ENCODE measurements at regions of chr22 and their contacts with region 1.

Region 1: DNA sequence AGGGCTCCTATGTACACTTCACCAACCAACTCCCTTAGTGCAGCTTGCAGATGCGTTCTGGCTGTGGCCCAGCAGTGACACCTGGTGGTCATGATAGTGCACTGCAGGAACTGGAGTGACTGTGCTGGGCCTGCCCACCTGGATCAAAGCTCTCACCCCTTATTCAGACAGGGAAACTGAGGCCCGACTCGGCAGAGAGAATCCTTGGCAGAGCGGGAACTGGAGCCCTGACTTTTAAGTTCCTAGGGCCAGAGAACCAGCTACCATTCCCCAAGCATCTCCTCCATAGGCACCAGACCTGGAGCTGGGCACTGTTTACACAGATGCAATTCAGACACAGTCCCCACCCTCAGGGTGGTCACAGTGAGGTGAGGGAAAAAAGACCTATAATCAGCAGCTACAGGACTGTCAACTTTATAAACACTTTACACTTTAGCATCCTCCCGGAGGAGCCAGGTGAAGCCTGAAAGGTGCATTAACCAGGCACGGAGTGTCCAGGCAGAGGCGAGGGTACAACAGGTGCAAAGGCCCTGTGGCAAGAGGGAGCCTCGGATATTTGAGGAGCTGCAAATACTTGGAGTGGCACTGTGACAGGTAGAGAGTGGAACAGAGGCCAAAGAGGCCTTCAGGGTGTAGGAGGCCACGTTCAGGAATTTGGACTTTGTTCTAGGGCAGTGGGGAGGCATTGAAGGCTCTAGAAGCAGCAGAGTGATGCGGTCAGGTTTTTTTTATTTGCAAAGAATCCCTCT is 22.0 kb downstream of the RHBDD3 start:
- DNase-seq: peak; percentile 76 to 79
- H3K4me3 ChIP-seq: no peak overlapping the region
- H3K27ac ChIP-seq: no peak overlapping the region
- H3K4me1 ChIP-seq: no peaks in the 10 kb centered on the region
- H3K27me3 ChIP-seq: no peaks in the 10 kb centered on the region
- CTCF ChIP-seq: peak; percentile 91 to 100 (median 94)
- POLR2A ChIP-seq: no peak

Region 2: GRCh38 chr22:28855355-28856094 is 390.3 kb before region 1 on chr22:
- intact Hi-C with region 1: loop called (anchors 10 kb)
- DNase-seq: peak; percentile 39 to 41
- H3K4me3 ChIP-seq: no peak overlapping the region
- H3K27ac ChIP-seq: no peak overlapping the region
- H3K4me1 ChIP-seq: no peaks in the 10 kb centered on the region
- H3K27me3 ChIP-seq: no peaks in the 10 kb centered on the region
- CTCF ChIP-seq: peak; percentile 65 to 99 (median 91)
- POLR2A ChIP-seq: no peak

Region 3: GRCh38 chr22:29055192-29055830 is 190.5 kb before region 1 on chr22:
- intact Hi-C with region 1: loop called (anchors 10 kb)
- DNase-seq: no peak
- H3K4me3 ChIP-seq: no peak overlapping the region
- H3K27ac ChIP-seq: no peak overlapping the region
- H3K4me1 ChIP-seq: no peaks in the 10 kb centered on the region
- H3K27me3 ChIP-seq: no peaks in the 10 kb centered on the region
- CTCF ChIP-seq: no peak
- POLR2A ChIP-seq: no peak

Region 4: DNA sequence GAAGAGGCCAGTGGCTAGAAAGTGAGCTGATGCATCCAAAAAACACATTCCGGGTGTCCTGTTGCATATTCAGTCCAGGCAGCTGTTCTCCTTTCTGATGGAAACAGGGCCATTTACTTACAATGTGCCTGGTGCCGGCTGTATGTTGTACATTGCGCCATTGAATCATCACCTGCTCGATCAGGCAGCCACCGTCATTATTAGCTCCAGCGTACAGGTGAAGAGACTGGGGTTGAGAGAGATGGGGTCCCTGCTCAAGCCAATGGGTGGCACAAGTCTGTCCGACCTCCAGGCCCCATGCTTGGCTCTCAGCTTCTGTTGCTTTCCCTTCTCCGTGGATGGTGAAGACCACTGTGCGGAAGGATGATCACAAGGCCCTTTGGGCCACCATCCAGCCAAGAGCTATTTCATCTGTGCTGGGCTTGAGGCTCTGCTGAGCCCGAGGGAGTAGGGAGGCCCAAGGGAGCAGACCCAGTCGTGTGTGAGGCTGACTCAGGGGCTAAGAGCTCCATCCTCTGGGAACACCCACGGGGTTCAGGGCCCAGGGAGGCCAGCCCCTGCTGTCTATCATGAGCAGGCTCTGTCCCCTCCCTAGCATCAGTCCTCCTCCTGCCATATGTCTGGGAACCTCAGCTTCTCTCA is 60.8 kb before region 1 on chr22:
- intact Hi-C with region 1: no loop called
- DNase-seq: no peak
- H3K4me3 ChIP-seq: no peak overlapping the region
- H3K27ac ChIP-seq: no peak overlapping the region
- H3K4me1 ChIP-seq: no peaks in the 10 kb centered on the region
- H3K27me3 ChIP-seq: no peaks in the 10 kb centered on the region
- CTCF ChIP-seq: no peak
- POLR2A ChIP-seq: no peak

Region 5: GRCh38 chr22:29195118-29195963 is 50.5 kb before region 1 on chr22:
- intact Hi-C with region 1: no loop called
- DNase-seq: no peak
- H3K4me3 ChIP-seq: no peak overlapping the region
- H3K27ac ChIP-seq: no peak overlapping the region
- H3K4me1 ChIP-seq: no peaks in the 10 kb centered on the region
- H3K27me3 ChIP-seq: no peaks in the 10 kb centered on the region
- CTCF ChIP-seq: no peak
- POLR2A ChIP-seq: no peak

Measured in thyroid gland (tissue), 4 donors.